ENCODE measurements at regions of chr7 and their contacts with region 1.

Region 1: DNA sequence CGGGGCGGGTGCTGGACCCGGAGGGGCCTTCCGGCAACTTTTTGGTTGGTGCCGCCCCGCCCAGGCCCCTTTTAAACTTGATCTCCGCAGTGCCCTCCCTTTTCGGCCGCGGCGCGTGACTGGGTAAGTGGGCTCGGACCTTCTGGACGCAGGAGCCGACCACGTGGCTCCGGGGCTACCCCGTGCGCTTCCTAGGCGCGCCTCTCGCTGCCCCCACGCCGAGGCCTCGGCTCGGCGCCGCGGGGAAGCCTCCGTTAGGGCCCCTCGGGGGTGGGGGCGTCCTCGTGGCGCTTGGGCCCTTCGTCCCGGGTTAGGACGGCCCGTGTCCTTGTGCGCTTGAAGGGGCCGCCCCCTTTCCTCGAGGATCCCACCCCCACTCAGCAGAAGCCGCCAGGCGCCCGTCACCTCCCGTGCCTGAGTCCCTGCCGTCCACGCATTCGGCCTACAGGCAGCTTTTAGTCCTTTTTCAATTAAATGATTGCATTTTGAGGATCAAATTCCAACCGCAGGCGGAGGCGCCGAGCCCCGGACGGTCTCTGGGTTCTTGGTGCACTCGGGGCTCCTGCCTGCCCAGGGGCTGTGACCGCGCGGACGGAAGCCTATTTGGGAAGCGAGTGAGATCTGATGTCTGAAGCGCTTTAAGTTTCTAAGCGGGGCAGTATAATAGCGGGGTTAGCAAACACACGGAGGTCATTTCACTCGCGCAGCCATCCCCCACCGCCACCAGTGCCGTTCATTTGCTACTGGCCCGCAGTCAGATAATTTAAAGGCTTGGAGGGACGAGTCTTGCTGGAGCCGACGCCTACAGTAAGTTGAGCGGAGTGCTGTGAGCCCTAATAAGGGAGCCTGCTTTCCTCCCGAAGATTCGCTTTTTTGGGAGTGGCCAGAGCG is 31.8 kb upstream of the TOMM7 start:
- DNase-seq: peak; percentile 92

Region 2: DNA sequence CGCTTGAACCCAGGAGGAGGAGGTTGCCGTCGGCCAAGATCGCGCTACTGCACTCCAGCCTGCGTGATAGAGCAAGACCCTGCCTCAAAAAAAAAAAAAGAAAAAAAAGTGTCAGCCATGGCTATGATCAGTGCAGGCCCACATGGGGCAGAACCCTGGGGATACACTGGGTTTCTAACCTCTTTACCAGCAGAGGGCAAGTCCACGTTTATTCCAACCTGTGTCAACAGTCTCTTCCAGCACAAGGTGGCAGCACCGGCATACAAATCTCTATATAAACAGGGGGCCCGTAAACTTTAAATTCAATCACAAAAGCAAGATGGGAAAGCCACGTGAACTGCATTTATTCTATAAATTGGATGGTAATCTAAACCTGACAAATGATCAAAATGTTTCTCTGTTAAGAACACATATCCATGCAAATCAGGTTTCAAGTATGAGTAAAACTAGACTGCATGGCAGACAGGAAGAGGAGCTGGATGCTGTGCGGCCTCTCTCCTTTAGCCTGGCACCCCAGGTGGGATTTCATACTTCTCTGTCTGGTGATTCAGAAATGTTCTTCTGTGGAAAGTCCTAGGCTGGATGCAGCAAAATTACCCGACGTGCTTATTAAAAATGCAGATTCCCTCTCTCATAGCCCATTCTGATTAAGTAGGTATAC is 294.4 kb before region 1 on chr7:
- intact Hi-C with region 1: loop called (anchors 2 kb)
- DNase-seq: peak; percentile 78

Region 3: DNA sequence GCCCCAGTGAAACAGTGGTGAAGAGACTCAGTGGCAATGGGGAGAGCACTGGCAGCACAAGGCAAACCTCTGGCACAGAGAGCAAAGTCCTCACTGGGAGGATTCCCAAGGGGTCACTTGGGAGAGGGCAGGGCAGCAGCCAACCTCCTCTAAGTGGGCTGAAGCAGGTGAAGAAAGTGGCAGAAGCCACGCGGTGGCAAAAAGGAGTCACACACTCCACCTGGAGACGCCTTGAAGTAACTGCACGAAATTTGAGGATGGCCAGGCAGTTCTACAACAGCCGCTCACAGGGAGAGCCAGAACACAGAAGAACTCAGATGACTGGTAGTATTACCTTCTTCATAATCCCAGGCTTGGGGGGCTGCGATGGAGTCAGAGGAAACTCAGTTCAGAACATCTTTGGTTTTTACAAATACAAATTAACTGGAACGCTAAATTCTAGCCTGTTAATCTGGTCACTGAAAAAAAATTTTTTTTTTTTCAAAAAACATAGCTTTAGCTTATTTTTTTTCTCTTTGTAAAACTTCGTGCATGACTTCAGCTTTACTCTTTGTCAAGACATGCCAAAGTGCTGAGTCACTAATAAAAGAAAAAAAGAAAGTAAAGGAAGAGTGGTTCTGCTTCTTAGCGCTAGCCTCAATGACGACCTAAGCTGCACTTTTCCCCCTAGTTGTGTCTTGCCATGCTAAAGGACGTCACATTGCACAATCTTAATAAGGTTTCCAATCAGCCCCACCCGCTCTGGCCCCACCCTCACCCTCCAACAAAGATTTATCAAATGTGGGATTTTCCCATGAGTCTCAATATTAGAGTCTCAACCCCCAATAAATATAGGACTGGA is 127.8 kb before region 1 on chr7:
- intact Hi-C with region 1: loop called (anchors 10 kb)
- DNase-seq: no peak

Region 4: GRCh38 chr7:22822486-22823141 is 31.8 kb before region 1 on chr7 and contains the start of gene TOMM7:
- intact Hi-C with region 1: loop called (anchors 2 kb)
- DNase-seq: peak; percentile 94
- total RNA-seq, gene TOMM7: 318 TPM

Region 5: DNA sequence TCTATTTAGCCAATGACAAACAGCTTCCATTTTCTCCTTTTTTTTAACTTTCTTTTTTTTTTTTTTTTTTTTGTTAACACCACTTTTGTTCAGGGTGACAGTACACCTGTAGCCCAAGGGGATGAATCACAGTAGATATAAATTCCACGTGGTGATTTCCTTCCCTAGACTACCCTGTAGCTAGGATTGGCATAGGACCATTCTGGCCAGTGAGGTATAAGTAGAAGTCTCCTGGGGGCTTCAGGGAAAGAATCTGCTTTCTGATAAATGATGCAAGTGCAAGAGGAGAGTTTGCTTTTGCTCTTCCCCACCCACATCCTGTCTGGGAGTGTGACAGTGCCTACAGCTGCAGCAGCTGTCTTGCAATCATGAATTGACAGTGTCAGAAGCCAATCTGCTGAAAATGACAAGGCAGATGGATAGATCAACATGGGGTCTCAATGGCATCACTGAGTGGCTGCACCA is 31.4 kb after region 1 on chr7:
- intact Hi-C with region 1: no loop called
- DNase-seq: no peak

Region 6: GRCh38 chr7:23013715-23014649 is 159.6 kb after region 1 on chr7 and contains the start of gene HYCC1:
- intact Hi-C with region 1: loop called (anchors 5 kb)
- DNase-seq: peak; percentile 100
- total RNA-seq, gene HYCC1: 38.9 TPM

Region 7: GRCh38 chr7:23055582-23056178 is 201.3 kb after region 1 on chr7:
- intact Hi-C with region 1: loop called (anchors 10 kb)
- DNase-seq: no peak